Posterior cingulate gyrus (tissue), 11 donors: ENCODE measurements at regions of chr1 and their contacts with region 1.

Region 1: GRCh38 chr1:244047621-244048471 is 3.2 kb upstream of the ZBTB18 start:
- DNase-seq: peak; percentile 96 to 100 (median 99)

Region 2: GRCh38 chr1:243343970-243344937 is 703.6 kb before region 1 on chr1:
- intact Hi-C with region 1: loop called (anchors 10 kb)
- DNase-seq: no peak

Region 3: GRCh38 chr1:243713470-243714186 is 334.2 kb before region 1 on chr1:
- intact Hi-C with region 1: loop called (anchors 5 kb)
- DNase-seq: peak in 6 of 10 donors; percentile 18 to 83 (median 40)

Region 4: GRCh38 chr1:243848858-243849420 is 198.9 kb before region 1 on chr1:
- intact Hi-C with region 1: loop called (anchors 5 kb)
- DNase-seq: peak; percentile 55 to 94 (median 64)

Region 5: GRCh38 chr1:243968413-243968812 is 79.4 kb before region 1 on chr1:
- intact Hi-C with region 1: no loop called
- DNase-seq: no peak

Region 6: DNA sequence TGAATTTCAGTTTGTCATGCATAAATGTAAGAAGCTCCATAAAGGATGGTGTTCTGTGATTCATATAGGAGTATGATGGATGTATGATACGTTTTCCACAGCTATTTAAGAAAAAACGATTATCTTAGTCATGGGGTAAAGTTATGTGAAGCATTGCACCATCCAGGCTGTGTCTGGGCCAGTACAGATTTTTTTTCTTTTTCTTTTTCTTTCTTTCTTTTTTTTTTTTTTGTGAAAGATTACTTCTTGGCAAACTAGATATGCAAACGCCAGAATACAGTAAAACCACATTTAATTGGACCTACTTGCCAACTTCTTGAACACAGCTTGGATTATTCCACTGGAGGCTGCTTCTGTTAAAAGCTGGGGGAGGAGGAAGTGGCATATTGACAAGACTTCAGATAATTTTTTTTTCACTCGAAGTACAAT is 18.1 kb after region 1 on chr1:
- intact Hi-C with region 1: loop called (anchors 1 kb)
- DNase-seq: no peak

Region 7: GRCh38 chr1:244104309-244105060 is 56.6 kb after region 1 on chr1:
- intact Hi-C with region 1: no loop called
- DNase-seq: no peak

Region 8: DNA sequence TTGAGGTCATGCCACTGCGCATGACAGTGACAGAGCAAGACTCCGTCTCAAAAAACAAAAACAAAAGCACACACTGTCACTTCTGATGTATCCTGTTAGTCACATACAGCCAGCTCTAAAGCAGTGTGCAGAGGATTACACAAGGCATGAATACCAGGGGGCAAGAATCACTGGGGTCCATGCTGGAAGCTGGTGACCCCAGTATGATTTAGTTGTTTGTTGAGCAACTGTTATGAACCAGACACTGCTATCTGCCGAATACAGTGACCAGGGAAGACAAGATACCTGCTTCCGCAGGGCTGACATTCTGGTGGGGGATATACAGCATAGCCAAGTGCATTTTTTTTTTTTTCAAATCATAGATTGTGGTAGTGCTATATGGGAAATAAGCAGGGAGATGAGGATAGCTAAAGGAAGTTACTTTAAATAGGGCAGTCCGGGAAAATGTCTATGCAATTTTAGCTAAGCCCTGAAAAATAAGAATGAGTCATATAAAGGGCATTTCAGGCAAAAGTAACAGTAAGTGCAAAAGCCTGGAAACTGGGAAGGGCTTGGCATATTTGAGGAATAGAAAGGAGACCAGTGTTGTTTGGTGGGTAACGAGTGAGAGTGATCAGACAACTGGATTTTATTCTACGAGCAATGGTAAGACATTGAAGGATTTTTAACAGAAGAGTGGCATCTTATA is 334.2 kb after region 1 on chr1:
- intact Hi-C with region 1: no loop called
- DNase-seq: peak in 1 of 10 donors; percentile 2

Region 9: DNA sequence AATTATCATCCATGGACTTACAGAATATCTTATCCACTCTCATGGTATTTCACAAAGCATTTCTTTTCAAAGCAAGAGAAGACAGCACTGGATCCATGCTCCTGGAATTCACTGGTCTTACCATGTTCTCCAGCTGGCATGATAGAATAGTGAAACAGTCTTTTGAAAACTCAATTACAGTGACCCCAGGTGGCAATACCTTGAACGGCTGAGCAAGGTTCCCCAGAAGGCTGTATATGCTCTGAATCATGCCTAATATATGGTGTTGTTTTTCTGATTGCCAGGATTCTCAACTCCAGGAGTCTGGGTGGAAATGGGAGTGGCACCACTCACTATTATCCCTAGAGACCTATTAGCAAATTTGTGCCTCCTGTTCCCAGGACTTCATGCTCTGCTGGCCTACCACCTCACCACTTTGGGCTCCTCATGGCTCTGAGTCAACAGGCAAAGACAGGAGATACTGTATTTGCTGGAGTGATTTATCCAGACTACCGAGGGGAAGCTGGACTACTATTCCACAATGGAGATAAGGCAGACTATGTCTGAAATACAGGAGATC is 500.8 kb after region 1 on chr1:
- intact Hi-C with region 1: no loop called
- DNase-seq: no peak